Caco-2 (cell line): ENCODE measurements at regions of chrX and their contacts with region 1.

Region 1: DNA sequence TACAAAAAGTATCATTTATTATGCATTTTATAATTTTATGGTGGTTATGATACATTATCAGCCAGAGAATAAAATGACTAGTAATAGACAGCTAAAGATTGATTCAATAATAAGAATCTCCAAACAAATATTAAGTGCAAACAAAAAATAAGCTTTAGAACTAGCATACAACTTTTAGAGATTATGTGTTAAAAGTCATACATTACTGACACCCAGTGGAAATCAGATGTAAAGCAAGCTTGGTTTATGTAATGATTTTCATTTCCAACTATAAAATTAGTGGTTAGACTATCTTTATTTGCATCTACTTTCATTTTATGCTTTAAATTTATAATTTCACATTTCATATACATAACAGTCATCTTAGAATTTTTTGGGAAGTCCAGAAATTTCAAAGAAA is 57.7 kb downstream of the IL13RA2 start:
- DNase-seq: no peak
- H3K4me3 ChIP-seq: no peak overlapping the region
- H3K4me3 Mint-ChIP-seq: no peak overlapping the region
- H3K27ac Mint-ChIP-seq: no peak overlapping the region
- H3K4me1 ChIP-seq: no peaks in the 10 kb centered on the region
- H3K4me1 Mint-ChIP-seq: no peaks in the 10 kb centered on the region
- H3K27me3 ChIP-seq: no peaks in the 10 kb centered on the region
- H3K27me3 Mint-ChIP-seq: no peaks in the 10 kb centered on the region
- CTCF ChIP-seq: peak; percentile 6 to 20

Region 2: DNA sequence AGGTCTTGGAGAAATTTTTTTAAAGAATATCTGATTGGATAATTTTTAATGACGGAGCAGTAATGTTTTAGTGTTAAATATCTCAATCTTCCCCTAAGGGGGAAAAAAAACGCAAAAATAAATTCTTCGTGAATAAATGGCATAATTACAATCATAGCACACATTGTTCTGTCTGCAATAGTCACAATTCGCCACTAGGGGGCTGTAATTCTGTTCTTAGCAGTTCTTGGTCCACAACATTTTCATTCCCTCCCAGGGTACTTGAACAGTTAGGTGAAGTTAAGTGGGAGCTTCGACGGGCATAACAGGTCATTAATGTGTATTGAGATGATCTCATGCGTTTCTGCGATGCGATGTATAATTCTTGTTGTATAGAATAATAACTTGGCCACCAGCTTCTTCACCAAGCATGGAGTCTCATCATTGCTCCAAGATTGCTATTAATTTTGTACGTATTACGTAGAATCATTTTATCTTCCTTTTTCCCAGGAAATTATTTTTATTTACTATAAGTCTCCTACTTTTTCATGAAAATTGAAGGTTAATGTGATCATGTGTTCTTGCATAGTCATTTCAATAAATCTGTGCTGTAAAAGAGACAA is 348.6 kb before region 1 on chrX:
- CTCF ChIA-PET with region 1: no interaction called
- POLR2A ChIA-PET with region 1: no interaction called
- intact Hi-C with region 1: loop called (anchors 1 kb)
- DNase-seq: peak in 1 of 2 experiments; percentile 27
- H3K4me3 ChIP-seq: no peak overlapping the region
- H3K4me3 Mint-ChIP-seq: no peak overlapping the region
- H3K27ac Mint-ChIP-seq: no peak overlapping the region
- H3K4me1 ChIP-seq: no peaks in the 10 kb centered on the region
- H3K4me1 Mint-ChIP-seq: no peaks in the 10 kb centered on the region
- H3K27me3 ChIP-seq: no peaks in the 10 kb centered on the region
- H3K27me3 Mint-ChIP-seq: peaks cover 7% of the 10 kb centered on the region
- CTCF ChIP-seq: peak; percentile 56 to 65

Region 3: DNA sequence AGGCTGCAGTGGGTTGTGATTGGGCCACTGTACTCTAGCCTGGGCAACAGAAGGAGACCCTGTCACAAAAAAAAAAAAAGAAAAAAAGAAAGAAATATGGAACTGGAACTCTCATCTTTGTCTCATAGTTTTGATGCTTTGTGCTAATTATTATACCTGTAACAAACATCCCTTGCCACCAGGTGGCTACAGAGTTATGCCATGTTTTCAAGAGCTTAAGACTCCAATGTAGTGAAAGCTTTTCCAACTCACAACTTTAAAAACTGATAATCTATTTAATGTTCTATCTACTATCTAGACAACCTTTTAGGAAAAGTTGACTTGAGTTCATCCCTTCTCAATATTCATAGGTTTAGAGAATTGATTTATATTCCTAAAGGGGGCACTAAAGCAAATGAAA is 333.4 kb before region 1 on chrX:
- CTCF ChIA-PET with region 1: interaction called, 12 read pairs
- POLR2A ChIA-PET with region 1: no interaction called
- intact Hi-C with region 1: loop called (anchors 1 kb)
- DNase-seq: peak in 1 of 2 experiments; percentile 7
- H3K4me3 ChIP-seq: no peak overlapping the region
- H3K4me3 Mint-ChIP-seq: no peak overlapping the region
- H3K27ac Mint-ChIP-seq: no peak overlapping the region
- H3K4me1 ChIP-seq: no peaks in the 10 kb centered on the region
- H3K4me1 Mint-ChIP-seq: no peaks in the 10 kb centered on the region
- H3K27me3 ChIP-seq: no peaks in the 10 kb centered on the region
- H3K27me3 Mint-ChIP-seq: no peaks in the 10 kb centered on the region
- CTCF ChIP-seq: peak; percentile 36 to 42

Region 4: GRCh38 chrX:114717921-114718320 is 241.8 kb before region 1 on chrX:
- CTCF ChIA-PET with region 1: interaction called, 3 read pairs
- POLR2A ChIA-PET with region 1: no interaction called
- intact Hi-C with region 1: loop called (anchors 10 kb)
- DNase-seq: peak; percentile 26 to 30
- H3K4me3 ChIP-seq: no peak overlapping the region
- H3K4me3 Mint-ChIP-seq: no peak overlapping the region
- H3K27ac Mint-ChIP-seq: no peak overlapping the region
- H3K4me1 ChIP-seq: no peaks in the 10 kb centered on the region
- H3K4me1 Mint-ChIP-seq: no peaks in the 10 kb centered on the region
- H3K27me3 ChIP-seq: no peaks in the 10 kb centered on the region
- H3K27me3 Mint-ChIP-seq: peaks cover 3% of the 10 kb centered on the region
- CTCF ChIP-seq: peak; percentile 38 to 55

Region 5: DNA sequence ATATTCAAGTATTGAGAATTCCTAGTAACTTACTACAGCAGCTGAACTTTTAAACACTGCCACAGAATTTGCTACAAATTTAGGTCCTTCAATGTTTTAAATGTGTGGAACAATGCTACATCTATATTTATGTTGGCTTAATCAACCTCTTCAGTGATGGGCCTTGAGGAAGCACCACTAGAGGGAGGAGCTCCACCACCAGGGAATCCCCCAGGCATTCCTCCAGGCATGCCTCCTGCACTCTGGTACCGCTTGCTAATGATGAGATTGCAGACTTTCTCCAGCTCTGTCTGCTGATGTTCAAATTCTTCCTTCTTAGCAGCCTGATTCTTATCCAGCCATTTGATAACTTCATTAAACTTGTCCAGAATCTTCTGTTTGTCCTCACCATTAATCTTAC is 185.0 kb before region 1 on chrX:
- CTCF ChIA-PET with region 1: no interaction called
- POLR2A ChIA-PET with region 1: no interaction called
- intact Hi-C with region 1: loop called (anchors 5 kb)
- DNase-seq: peak; percentile 0 to 23
- H3K4me3 ChIP-seq: no peak overlapping the region
- H3K4me3 Mint-ChIP-seq: no peak overlapping the region
- H3K27ac Mint-ChIP-seq: no peak overlapping the region
- H3K4me1 ChIP-seq: no peaks in the 10 kb centered on the region
- H3K4me1 Mint-ChIP-seq: no peaks in the 10 kb centered on the region
- H3K27me3 ChIP-seq: no peaks in the 10 kb centered on the region
- H3K27me3 Mint-ChIP-seq: no peaks in the 10 kb centered on the region
- CTCF ChIP-seq: peak in 1 of 2 experiments; percentile 4

Region 6: GRCh38 chrX:114985967-114986592 is 26.4 kb after region 1 on chrX:
- CTCF ChIA-PET with region 1: no interaction called
- POLR2A ChIA-PET with region 1: no interaction called
- intact Hi-C with region 1: no loop called
- DNase-seq: no peak
- H3K4me3 ChIP-seq: no peak overlapping the region
- H3K4me3 Mint-ChIP-seq: no peak overlapping the region
- H3K27ac Mint-ChIP-seq: no peak overlapping the region
- H3K4me1 ChIP-seq: no peaks in the 10 kb centered on the region
- H3K4me1 Mint-ChIP-seq: no peaks in the 10 kb centered on the region
- H3K27me3 ChIP-seq: no peaks in the 10 kb centered on the region
- H3K27me3 Mint-ChIP-seq: peaks cover 2% of the 10 kb centered on the region
- CTCF ChIP-seq: no peak

Region 7: DNA sequence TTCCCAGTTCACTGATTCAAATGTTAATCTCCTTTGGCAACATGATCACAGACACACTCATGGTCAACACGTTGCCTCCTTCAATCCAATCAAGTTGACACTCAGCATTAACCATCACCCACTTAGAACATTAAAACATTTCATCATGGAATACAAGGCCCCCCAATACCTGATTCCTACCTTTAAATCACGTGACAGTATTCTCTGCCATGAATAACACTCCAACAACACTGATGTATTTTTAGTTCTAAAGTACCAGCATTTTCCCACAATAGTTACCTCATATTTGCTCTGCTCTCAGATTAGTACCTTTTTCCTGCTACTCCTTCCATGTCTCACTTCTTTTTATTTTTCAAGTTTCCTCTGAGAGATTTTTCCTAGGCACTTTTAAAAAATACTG is 38.0 kb after region 1 on chrX:
- CTCF ChIA-PET with region 1: no interaction called
- POLR2A ChIA-PET with region 1: no interaction called
- intact Hi-C with region 1: no loop called
- DNase-seq: no peak
- H3K4me3 ChIP-seq: no peak overlapping the region
- H3K4me3 Mint-ChIP-seq: no peak overlapping the region
- H3K27ac Mint-ChIP-seq: no peak overlapping the region
- H3K4me1 ChIP-seq: no peaks in the 10 kb centered on the region
- H3K4me1 Mint-ChIP-seq: no peaks in the 10 kb centered on the region
- H3K27me3 ChIP-seq: no peaks in the 10 kb centered on the region
- H3K27me3 Mint-ChIP-seq: peaks cover 2% of the 10 kb centered on the region
- CTCF ChIP-seq: no peak

Region 8: DNA sequence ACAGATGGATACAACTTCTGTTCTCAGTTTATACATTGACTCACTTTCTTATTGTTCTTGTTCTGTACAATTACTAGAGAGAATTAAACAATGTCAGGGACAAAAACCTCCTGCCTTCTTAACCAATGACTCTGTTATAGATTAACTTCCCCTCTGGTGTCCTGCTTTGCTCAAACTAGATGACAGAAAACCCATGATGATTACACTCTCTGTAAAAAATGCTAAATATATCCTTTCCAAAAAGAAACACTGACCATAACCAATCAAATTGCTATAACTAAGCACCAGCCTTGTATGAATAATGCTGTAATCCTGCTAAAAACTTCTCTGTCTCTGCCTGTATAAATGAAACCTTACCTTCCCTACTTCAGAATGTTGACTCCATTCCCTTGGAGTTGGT is 87.5 kb after region 1 on chrX:
- CTCF ChIA-PET with region 1: no interaction called
- POLR2A ChIA-PET with region 1: no interaction called
- intact Hi-C with region 1: no loop called
- DNase-seq: no peak
- H3K4me3 ChIP-seq: no peak overlapping the region
- H3K4me3 Mint-ChIP-seq: no peak overlapping the region
- H3K27ac Mint-ChIP-seq: no peak overlapping the region
- H3K4me1 ChIP-seq: no peaks in the 10 kb centered on the region
- H3K4me1 Mint-ChIP-seq: no peaks in the 10 kb centered on the region
- H3K27me3 ChIP-seq: no peaks in the 10 kb centered on the region
- H3K27me3 Mint-ChIP-seq: no peaks in the 10 kb centered on the region
- CTCF ChIP-seq: no peak